ENCODE measurements at regions of chr7 and their contacts with region 1.

Region 1: DNA sequence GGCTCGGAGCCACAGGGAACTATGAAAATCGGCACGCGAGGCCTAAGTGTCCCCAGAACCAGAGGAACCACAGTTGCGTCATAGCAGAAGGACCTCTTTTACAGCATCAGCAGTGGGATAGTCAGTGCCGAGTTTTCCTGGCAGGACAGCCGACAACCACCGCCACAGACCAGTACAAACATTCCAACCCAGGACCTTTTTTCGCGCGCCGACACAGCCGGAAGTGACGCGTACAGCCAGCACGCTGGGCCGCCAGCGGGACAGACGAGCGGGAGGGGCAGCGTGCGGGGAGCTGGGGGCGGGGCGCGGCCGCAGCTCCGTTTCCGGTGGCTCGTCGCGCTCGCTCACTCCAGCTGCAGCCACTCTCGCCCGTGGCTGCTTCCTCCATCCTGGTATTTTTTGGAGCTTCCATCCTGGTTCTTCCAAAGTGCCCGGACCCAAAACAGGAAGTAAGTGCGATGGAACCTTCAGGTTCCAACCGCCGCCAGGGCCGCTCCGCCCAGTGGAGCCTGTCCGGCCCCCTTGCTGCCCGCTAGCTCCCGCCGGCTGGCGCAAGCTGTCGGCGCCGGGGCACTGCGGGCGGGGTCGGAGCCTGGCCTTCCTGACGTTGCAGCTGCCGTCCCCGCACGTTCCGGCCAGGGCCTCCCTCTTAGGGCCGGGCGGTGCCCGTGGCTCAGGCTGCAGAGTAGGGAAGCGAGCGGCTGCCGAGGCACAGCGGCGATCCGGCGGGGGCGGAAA is at the start of gene DMTF1:
- DNase-seq: peak; percentile 53
- ATAC-seq: peak; percentile 83
- H3K4me3 ChIP-seq: peak within 1 kb of the TSS; percentile 91
- H3K27ac ChIP-seq: peak within 1 kb of the TSS; percentile 99
- H3K4me1 ChIP-seq: no peaks in the 10 kb centered on the region
- H3K27me3 ChIP-seq: no peaks in the 10 kb centered on the region
- CTCF ChIP-seq: no peak
- EP300 ChIP-seq: peak in 1 of 2 experiments; percentile 48; a peak in 1 of 4 replicates
- POLR2A ChIP-seq: peak; percentile 96
- RAD21 ChIP-seq: no peak
- polyA plus RNA-seq, gene DMTF1: 24.3 to 28.4 TPM

Region 2: GRCh38 chr7:86939197-86939814 is 213.0 kb before region 1 on chr7:
- CTCF ChIA-PET with region 1: interaction called, 23 read pairs
- POLR2A ChIA-PET with region 1: no interaction called
- RAD21 ChIA-PET with region 1: interaction called, 11 read pairs
- SMC1A ChIA-PET with region 1: interaction called, 32 read pairs
- in situ Hi-C with region 1: loop called (anchors 5 kb)
- intact Hi-C with region 1: loop called (anchors 1 kb)
- DNase-seq: peak; percentile 40
- ATAC-seq: peak; percentile 88
- H3K4me3 ChIP-seq: no peak overlapping the region
- H3K27ac ChIP-seq: no peak overlapping the region
- H3K4me1 ChIP-seq: no peaks in the 10 kb centered on the region
- H3K27me3 ChIP-seq: no peaks in the 10 kb centered on the region
- CTCF ChIP-seq: peak; percentile 57 to 71 (median 69); a peak in 5 of 6 replicates
- EP300 ChIP-seq: no peak
- POLR2A ChIP-seq: no peak
- RAD21 ChIP-seq: peak; percentile 88

Region 3: DNA sequence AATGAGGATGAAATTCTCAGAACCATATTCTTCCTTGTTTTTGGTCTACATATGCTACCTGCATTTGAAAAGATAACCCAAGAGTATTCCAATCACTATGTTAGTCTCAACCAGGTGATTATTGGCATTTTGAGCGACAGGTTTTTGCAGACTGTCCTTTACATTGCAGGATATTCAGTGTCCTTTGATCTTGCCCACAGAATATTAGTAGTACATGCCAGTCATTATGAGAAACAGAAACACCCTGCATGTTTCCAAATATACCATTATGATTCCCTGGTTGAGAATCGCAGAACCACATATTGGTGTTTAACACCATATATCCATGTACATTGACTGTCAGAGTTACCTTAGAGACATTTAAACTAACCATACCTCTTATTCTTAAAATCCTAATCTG is 36.7 kb after region 1 on chr7:
- CTCF ChIA-PET with region 1: interaction called, 6 read pairs
- POLR2A ChIA-PET with region 1: no interaction called
- RAD21 ChIA-PET with region 1: interaction called, 3 read pairs
- SMC1A ChIA-PET with region 1: interaction called, 19 read pairs
- in situ Hi-C with region 1: no loop called
- intact Hi-C with region 1: no loop called
- DNase-seq: no peak
- ATAC-seq: peak; percentile 28
- H3K4me3 ChIP-seq: no peak overlapping the region
- H3K27ac ChIP-seq: no peak overlapping the region
- H3K4me1 ChIP-seq: no peaks in the 10 kb centered on the region
- H3K27me3 ChIP-seq: no peaks in the 10 kb centered on the region
- CTCF ChIP-seq: no peak
- EP300 ChIP-seq: no peak
- POLR2A ChIP-seq: no peak
- RAD21 ChIP-seq: no peak

Region 4: DNA sequence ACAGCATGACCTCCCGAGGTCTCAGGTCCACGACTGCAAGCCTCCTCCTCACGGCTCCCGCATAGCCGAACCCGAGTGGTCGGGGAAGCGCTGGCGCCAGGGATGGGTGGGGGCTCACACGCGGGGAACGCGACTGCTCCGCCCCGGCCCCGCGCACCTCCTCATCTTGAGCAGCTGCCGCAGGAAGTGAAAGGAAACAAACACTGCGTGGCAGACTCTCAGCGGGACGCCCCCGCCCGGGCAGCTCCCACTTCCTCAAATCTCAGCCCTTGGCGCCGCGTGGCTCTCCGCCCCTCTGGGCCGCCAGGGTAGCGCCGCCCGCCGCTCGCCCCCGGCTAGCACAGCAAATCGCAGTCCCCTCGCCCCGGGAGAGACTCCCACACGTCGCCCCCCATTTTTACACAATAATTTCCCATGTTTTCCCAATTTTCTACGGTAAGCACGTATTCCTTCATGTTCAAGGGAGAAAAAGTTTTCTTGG is 67.3 kb after region 1 on chr7 and contains the start of gene TMEM243:
- CTCF ChIA-PET with region 1: interaction called, 13 read pairs
- POLR2A ChIA-PET with region 1: interaction called, 215 read pairs
- RAD21 ChIA-PET with region 1: interaction called, 153 read pairs
- SMC1A ChIA-PET with region 1: interaction called, 112 read pairs
- in situ Hi-C with region 1: no loop called
- intact Hi-C with region 1: loop called (anchors 1 kb)
- DNase-seq: peak; percentile 45
- ATAC-seq: peak; percentile 69
- H3K4me3 ChIP-seq: peak within 1 kb of the TSS; percentile 95
- H3K27ac ChIP-seq: peak within 1 kb of the TSS; percentile 98
- H3K4me1 ChIP-seq: peaks cover 8% of the 10 kb centered on the region
- H3K27me3 ChIP-seq: no peaks in the 10 kb centered on the region
- CTCF ChIP-seq: peak; percentile 28 to 42 (median 34); a peak in 5 of 6 replicates
- EP300 ChIP-seq: peak in 1 of 2 experiments; percentile 73; a peak in 2 of 4 replicates
- POLR2A ChIP-seq: peak; percentile 90
- RAD21 ChIP-seq: peak; percentile 29; the same call in 1 of the 2 replicates
- polyA plus RNA-seq, gene TMEM243: 47.8 to 70.9 TPM

Region 5: GRCh38 chr7:87404674-87405073 is 252.4 kb after region 1 on chr7:
- CTCF ChIA-PET with region 1: no interaction called
- POLR2A ChIA-PET with region 1: no interaction called
- RAD21 ChIA-PET with region 1: no interaction called
- SMC1A ChIA-PET with region 1: no interaction called
- in situ Hi-C with region 1: no loop called
- intact Hi-C with region 1: no loop called
- DNase-seq: no peak
- ATAC-seq: no peak
- H3K4me3 ChIP-seq: no peak overlapping the region
- H3K27ac ChIP-seq: no peak overlapping the region
- H3K4me1 ChIP-seq: no peaks in the 10 kb centered on the region
- H3K27me3 ChIP-seq: no peaks in the 10 kb centered on the region
- CTCF ChIP-seq: no peak
- EP300 ChIP-seq: no peak
- POLR2A ChIP-seq: no peak
- RAD21 ChIP-seq: no peak

Region 6: DNA sequence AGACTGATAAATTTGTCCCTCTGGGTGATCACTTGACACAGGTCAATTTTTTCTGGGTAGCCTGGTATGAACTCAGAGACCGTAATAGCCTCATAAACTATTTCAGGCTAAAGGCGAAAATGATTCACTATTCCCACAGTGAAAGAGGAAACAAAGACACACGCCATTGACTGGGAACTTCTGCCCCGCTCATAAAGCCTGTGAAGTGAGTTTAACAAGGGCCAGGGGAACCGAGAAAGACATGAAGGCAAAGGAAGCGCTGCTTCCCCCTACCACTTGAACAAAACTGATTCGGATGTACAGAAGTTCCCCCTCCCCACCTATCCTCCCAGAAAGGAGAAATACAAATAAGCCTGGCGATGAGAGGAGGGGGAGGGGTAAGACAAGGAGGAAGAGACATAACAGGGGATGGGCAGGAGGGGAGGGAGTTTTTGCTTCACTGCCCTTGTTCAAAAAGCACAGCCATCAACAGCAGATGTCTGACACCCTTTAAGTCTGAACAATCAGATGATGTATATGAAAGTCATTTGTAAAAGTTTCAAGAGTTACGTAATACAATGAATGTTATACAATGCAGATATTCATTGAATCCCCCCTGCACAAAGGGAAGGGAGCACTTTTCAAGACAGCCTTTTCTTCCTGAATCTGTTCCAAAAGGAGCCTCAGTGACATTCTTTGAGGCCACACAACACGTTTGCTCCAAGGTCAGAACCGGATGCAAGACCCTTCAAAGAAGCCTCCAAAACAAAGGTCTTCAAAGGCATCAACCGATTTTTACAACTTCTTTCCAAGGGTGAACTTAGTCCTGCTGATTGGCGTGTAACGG is 322.5 kb after region 1 on chr7:
- CTCF ChIA-PET with region 1: interaction called, 3 read pairs
- POLR2A ChIA-PET with region 1: no interaction called
- RAD21 ChIA-PET with region 1: no interaction called
- SMC1A ChIA-PET with region 1: no interaction called
- in situ Hi-C with region 1: no loop called
- intact Hi-C with region 1: loop called (anchors 5 kb)
- DNase-seq: peak; percentile 96
- ATAC-seq: peak; percentile 80
- H3K4me3 ChIP-seq: peak overlapping the region; percentile 77
- H3K27ac ChIP-seq: peak overlapping the region; percentile 72
- H3K4me1 ChIP-seq: peaks cover 12% of the 10 kb centered on the region
- H3K27me3 ChIP-seq: no peaks in the 10 kb centered on the region
- CTCF ChIP-seq: no peak
- EP300 ChIP-seq: peak; percentile 87 to 88
- POLR2A ChIP-seq: 0 out of 2 replicates have a peak, but pooled peaks have one; percentile 18
- RAD21 ChIP-seq: 0 out of 2 replicates have a peak, but pooled peaks have one; percentile 1